A673 (cell line): ENCODE measurements at regions of chr10 and their contacts with region 1.

Region 1: DNA sequence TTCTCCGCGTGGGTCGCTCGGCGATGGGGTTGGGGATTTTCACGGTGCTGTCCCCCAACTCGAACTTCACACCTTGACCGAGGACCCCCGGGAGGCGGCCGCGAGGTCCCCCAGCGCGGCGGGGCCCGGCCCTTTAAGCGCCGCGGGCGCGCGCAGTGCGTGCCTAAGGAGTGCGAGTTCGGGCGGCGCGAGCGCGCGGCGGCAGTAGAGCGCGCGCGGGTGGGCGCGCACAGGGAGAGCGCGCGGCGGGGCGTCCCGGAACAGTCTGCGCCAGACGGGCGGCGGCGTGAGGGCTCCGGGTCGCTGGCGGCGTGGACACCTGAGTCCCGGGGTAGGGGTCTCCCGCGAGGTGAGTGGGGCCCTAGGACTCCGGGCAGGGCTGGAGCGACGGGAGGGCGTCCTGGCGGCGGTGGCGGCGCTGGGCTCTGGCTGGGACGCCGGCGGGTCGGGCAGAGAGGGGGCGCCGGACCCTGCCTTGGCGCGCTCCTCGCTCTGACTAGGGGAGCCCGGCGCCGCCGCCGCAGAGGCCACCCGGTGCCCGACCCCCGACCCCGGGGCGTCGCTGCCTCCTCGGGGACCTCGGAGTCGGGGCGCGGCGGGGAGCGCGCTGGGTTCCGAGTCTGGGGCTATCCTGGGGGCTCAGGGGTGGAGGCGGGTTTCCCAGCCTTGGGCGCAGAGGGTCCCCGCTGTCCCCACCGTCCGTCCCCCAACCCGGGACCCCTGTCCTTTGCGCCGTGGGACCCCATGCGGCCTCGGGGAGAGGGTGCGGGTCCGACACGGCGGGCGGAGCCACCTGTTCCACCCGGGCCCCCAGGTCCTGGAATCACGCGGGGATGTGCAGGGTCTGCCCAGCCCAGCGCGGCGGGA is at the start of gene PROSER2:
- DNase-seq: peak; percentile 86
- H3K4me3 ChIP-seq: peak within 1 kb of the TSS; percentile 99
- H3K27ac ChIP-seq: peak within 1 kb of the TSS; percentile 90
- H3K4me1 ChIP-seq: peaks cover 38% of the 10 kb centered on the region
- H3K27me3 ChIP-seq: no peaks in the 10 kb centered on the region
- CTCF ChIP-seq: 0 out of 2 replicates have a peak, but pooled peaks have one; percentile 12
- total RNA-seq, gene PROSER2: 37.1 and 40.4 TPM in 2 replicates

Region 2: DNA sequence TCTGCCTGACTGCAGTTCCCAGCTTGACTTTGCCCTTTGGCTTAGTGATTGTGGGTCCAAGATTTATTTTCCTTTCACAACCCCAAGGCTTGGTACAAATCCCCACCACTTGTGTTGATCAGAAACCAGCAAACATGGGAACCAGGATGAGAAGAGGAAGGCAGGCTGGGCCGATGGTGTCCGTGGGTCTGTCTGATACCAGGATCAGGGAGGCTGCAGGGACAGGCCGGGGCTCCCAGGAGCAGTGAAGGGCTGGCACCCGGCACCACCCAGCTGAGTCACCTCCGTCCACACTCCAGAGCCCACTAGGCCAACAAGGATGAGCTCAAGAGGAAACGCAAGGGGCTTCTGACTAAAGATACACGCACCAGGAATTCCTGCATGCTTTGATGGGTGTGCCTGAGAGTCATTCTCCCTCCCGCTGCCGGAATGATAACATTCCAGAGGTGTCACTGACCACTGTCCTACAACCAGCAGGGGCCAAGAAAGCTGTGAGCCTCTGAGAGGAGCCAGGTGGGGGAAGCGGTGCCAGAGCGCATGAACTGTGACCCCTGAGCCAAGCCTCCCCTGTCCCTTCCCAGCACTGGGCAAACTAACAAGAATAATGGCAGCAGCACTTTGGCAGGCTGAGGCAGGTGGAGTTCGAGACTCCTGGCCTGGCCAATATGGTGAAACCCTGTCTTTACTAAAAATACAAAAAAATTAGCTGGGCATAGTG is 29.4 kb before region 1 on chr10:
- CTCF ChIA-PET with region 1: interaction called, 13 read pairs
- POLR2A ChIA-PET with region 1: no interaction called
- intact Hi-C with region 1: loop called (anchors 1 kb)
- DNase-seq: no peak
- H3K4me3 ChIP-seq: no peak overlapping the region
- H3K27ac ChIP-seq: peak overlapping the region; percentile 48
- H3K4me1 ChIP-seq: peaks cover 52% of the 10 kb centered on the region
- H3K27me3 ChIP-seq: no peaks in the 10 kb centered on the region
- CTCF ChIP-seq: no peak

Region 3: DNA sequence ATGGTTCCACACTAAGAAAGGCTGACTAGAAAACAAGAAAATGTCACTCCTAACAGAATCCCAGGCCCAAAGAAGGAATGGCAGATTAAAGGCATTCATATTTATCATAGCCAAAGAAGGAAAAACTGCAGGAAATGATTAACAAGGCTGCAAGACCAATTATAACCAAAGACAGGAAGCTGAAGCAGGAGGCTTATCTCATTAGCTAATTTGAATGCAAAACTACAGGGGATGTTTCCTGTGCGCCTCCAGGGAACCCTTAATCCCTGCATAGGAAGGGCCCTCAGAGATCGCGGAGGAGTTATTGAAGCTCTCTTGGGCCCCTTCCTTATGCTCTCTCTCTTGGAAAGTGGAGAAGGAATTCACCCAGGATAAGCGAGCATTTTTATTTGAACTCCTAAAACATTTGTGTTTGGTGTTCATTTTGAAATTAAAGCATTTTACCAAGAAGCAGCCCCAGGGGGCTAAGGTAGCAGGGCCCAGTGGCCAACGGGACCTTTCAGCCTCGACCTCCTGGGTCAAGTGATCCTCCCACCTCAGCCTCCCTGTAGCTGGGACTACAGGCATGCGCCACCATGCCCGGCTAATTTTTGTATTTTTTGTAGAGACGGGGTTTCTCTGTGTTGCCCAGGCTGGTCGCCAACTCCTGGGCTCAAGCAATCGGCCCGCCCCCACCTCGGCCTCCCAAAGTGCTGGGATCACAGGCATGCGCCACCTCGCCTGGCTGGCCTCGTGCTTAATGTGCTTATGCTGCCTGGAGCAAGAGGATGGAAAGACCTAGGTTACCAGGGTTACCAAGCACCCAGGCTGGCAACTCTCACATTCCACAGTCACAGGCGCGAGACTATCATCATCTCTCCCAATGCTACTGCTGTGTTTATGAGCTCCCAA is 24.3 kb before region 1 on chr10:
- CTCF ChIA-PET with region 1: interaction called, 13 read pairs
- POLR2A ChIA-PET with region 1: no interaction called
- intact Hi-C with region 1: loop called (anchors 1 kb)
- DNase-seq: peak; percentile 100
- H3K4me3 ChIP-seq: peak overlapping the region; percentile 3
- H3K27ac ChIP-seq: peak overlapping the region; percentile 98
- H3K4me1 ChIP-seq: peaks cover 53% of the 10 kb centered on the region
- H3K27me3 ChIP-seq: no peaks in the 10 kb centered on the region
- CTCF ChIP-seq: no peak

Region 4: DNA sequence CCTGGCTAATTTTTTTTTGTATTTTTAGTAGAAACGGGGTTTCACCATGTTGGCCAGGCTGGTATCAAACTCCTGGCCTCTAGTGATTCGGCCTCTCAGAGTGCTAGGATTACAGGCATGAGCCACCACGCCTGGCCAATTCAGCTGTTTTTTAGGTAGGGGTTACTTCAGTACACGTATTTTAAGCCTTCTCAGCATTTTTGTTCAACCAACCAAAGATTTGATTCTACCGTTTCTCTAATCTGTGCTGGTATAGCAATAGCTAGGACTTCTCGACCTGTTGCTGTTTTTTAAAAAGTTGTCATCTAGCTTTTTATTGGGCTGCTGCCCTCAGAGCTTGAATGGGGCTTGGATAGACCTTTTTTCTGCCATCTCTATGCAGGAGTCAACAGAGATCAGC is 34.7 kb after region 1 on chr10:
- CTCF ChIA-PET with region 1: interaction called, 11 read pairs
- POLR2A ChIA-PET with region 1: no interaction called
- intact Hi-C with region 1: no loop called
- DNase-seq: no peak
- H3K4me3 ChIP-seq: no peak overlapping the region
- H3K27ac ChIP-seq: no peak overlapping the region
- H3K4me1 ChIP-seq: no peaks in the 10 kb centered on the region
- H3K27me3 ChIP-seq: no peaks in the 10 kb centered on the region
- CTCF ChIP-seq: no peak

Region 5: GRCh38 chr10:12181065-12181775 is 357.9 kb after region 1 on chr10:
- CTCF ChIA-PET with region 1: no interaction called
- POLR2A ChIA-PET with region 1: no interaction called
- intact Hi-C with region 1: no loop called
- DNase-seq: no peak
- H3K4me3 ChIP-seq: no peak overlapping the region
- H3K27ac ChIP-seq: no peak overlapping the region
- H3K4me1 ChIP-seq: no peaks in the 10 kb centered on the region
- H3K27me3 ChIP-seq: no peaks in the 10 kb centered on the region
- CTCF ChIP-seq: no peak